PC-9 (cell line): ENCODE measurements at regions of chr11 and their contacts with region 1.

Region 1: DNA sequence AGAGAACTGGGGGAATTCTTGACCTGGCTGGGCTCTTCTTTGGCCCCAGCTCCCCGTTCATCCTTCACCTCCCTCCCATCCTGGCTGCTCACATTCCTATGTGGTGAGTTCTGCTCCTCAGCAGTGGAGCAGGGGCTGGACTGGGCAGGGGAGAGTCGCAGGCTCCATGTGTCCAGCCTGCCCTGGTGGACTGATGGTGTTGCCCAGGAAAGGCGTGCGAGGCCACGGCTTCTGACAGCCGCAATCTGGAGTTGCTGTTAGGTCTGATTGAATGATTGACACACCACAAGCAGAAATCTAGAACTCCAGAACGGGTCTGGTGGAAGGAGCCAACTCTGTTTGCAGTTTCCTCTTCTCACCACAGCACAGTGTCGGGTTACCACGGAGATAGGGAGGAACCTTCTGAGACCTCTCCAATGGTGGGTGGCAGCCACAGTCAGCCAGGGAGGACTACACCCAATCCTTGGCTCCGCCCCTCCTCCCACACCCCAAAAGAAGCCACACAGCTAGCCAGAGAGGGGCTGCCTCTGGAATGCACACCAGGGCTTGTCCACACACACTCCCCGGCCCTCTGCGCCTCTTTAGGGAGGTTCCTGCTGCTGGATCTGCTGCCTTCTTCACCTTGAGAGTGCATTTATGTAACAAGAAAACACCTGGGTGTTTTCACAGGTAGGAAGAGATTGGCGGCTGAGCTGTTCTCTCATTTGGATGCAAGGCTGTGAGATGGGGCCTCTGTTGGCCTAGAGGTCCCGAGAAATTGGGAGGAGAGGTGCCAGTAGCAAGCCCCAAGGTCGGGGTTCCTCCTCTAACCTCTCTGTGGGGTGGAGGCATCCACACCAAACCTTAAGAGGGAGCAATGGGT is 56.4 kb upstream of the CD44 start:
- DNase-seq: peak; percentile 94 to 95
- H3K4me3 ChIP-seq: peak overlapping the region; percentile 39; the same call in 1 of the 2 replicates
- H3K27ac ChIP-seq: peak overlapping the region; percentile 85
- H3K4me1 ChIP-seq: peaks cover 69% of the 10 kb centered on the region
- H3K27me3 ChIP-seq: no peaks in the 10 kb centered on the region
- CTCF ChIP-seq: no peak

Region 2: GRCh38 chr11:33606762-33607161 is 1475.8 kb before region 1 on chr11:
- CTCF ChIA-PET with region 1: no interaction called
- POLR2A ChIA-PET with region 1: no interaction called
- intact Hi-C with region 1: no loop called
- DNase-seq: no peak
- H3K4me3 ChIP-seq: no peak overlapping the region
- H3K27ac ChIP-seq: no peak overlapping the region
- H3K4me1 ChIP-seq: no peaks in the 10 kb centered on the region
- H3K27me3 ChIP-seq: no peaks in the 10 kb centered on the region
- CTCF ChIP-seq: no peak

Region 3: GRCh38 chr11:34916015-34916842 is 166.3 kb before region 1 on chr11 and contains the starts of genes APIP and PDHX:
- CTCF ChIA-PET with region 1: no interaction called
- POLR2A ChIA-PET with region 1: no interaction called
- intact Hi-C with region 1: loop called (anchors 2 kb)
- DNase-seq: peak; percentile 98 to 99
- H3K4me3 ChIP-seq: peak within 1 kb of the TSS; percentile 74
- H3K27ac ChIP-seq: peak within 1 kb of the TSS; percentile 83
- H3K4me1 ChIP-seq: peaks cover 26% of the 10 kb centered on the region
- H3K27me3 ChIP-seq: no peaks in the 10 kb centered on the region
- CTCF ChIP-seq: no peak
- total RNA-seq, gene APIP: 34.1 and 41.0 TPM in 2 replicates
- total RNA-seq, gene PDHX: 44.7 and 47.0 TPM in 2 replicates

Region 4: DNA sequence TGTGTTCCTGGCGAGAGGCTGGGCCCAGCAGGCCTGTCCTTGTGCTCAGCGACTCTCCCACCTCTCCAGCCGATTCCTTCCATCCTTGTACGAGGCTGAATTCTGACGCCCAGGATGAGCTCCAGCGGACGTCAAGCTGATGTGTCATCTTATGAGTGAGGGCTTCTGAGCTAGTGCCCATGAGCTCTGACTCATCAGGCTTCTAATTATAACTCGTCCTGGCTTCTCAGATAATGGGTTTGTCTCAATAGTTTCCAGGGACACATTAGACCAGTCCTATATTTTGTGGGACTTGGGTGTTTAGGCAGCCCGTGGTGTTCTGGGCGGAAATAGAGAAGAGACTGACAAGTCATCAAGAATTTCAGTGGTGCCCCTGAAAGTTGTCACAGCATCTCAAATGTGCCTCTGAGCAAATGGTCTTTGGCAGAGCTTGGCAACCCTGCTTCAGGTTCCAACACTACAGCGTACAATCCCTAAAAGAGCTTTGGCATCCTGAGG is 51.8 kb before region 1 on chr11:
- CTCF ChIA-PET with region 1: no interaction called
- POLR2A ChIA-PET with region 1: interaction called, 5 read pairs
- intact Hi-C with region 1: loop called (anchors 2 kb)
- DNase-seq: peak; percentile 66 to 95
- H3K4me3 ChIP-seq: peak overlapping the region; percentile 8; the same call in 1 of the 2 replicates
- H3K27ac ChIP-seq: peak overlapping the region; percentile 85
- H3K4me1 ChIP-seq: peaks cover 49% of the 10 kb centered on the region
- H3K27me3 ChIP-seq: no peaks in the 10 kb centered on the region
- CTCF ChIP-seq: no peak

Region 5: GRCh38 chr11:35049859-35050531 is 32.6 kb before region 1 on chr11:
- CTCF ChIA-PET with region 1: no interaction called
- POLR2A ChIA-PET with region 1: no interaction called
- intact Hi-C with region 1: loop called (anchors 2 kb)
- DNase-seq: no peak
- H3K4me3 ChIP-seq: no peak overlapping the region
- H3K27ac ChIP-seq: no peak overlapping the region
- H3K4me1 ChIP-seq: 0 out of 2 replicates have a peak, but pooled peaks cover 4% of the 10 kb centered on the region
- H3K27me3 ChIP-seq: no peaks in the 10 kb centered on the region
- CTCF ChIP-seq: no peak

Region 6: GRCh38 chr11:35118906-35119305 is 36.4 kb after region 1 on chr11:
- CTCF ChIA-PET with region 1: no interaction called
- POLR2A ChIA-PET with region 1: no interaction called
- intact Hi-C with region 1: no loop called
- DNase-seq: no peak
- H3K4me3 ChIP-seq: no peak overlapping the region
- H3K27ac ChIP-seq: no peak overlapping the region
- H3K4me1 ChIP-seq: 0 out of 2 replicates have a peak, but pooled peaks cover 8% of the 10 kb centered on the region
- H3K27me3 ChIP-seq: no peaks in the 10 kb centered on the region
- CTCF ChIP-seq: no peak

Region 7: GRCh38 chr11:35138943-35139721 is 56.6 kb after region 1 on chr11 and contains the start of gene CD44:
- CTCF ChIA-PET with region 1: no interaction called
- POLR2A ChIA-PET with region 1: interaction called, 5 read pairs
- intact Hi-C with region 1: loop called (anchors 1 kb)
- DNase-seq: peak; percentile 72 to 84
- H3K4me3 ChIP-seq: peak within 1 kb of the TSS; percentile 70
- H3K27ac ChIP-seq: peak within 1 kb of the TSS; percentile 91
- H3K4me1 ChIP-seq: peaks cover 66% of the 10 kb centered on the region
- H3K27me3 ChIP-seq: no peaks in the 10 kb centered on the region
- CTCF ChIP-seq: no peak
- total RNA-seq, gene CD44: 775 and 872 TPM in 2 replicates

Region 8: DNA sequence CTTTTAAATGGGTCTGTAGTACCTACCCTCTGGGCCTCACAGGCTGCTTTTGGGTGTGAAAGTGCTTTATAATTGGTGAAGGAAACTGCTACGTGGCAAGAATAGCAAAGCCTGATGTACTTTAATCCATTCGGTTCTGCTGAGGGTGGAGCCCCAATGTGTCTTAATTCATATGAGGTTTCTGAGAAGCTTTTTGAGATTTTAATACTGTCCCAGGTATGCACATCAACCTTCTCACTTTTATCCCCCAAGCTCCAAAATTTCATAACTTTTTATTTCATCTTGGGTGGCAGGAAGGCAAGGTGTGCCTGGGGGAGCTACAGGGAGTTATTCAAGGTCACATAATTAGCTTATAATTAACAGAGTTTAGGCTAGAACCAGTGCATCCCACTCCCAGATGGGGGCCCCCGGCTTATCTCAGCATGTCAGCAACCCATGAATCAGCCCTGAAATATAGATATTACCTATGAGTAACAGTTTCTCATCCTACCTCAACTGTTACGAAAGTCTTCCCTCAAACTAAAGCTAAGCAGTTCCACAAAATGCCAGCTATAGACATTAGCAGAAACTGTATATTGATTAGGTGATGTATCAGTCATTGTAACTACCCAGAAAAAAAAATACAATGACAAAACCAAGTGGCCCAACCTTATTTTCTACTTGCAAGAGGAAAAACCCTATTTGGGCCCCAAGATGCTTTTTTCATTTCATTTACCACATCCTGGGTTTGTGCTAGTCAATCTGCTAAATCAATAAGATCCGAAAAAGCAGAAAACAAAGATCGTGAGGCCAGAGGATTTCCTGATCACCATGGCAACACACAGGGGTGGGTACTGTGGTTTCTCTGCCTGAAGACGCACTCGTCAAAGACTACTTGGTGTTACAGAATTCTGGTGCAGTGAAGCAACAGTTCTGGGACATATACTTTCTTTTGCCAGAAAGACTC is 83.1 kb after region 1 on chr11:
- CTCF ChIA-PET with region 1: no interaction called
- POLR2A ChIA-PET with region 1: no interaction called
- intact Hi-C with region 1: loop called (anchors 1 kb)
- DNase-seq: peak in 1 of 2 experiments; percentile 85
- H3K4me3 ChIP-seq: peak overlapping the region; percentile 36
- H3K27ac ChIP-seq: peak overlapping the region; percentile 94
- H3K4me1 ChIP-seq: peaks cover 100% of the 10 kb centered on the region
- H3K27me3 ChIP-seq: no peaks in the 10 kb centered on the region
- CTCF ChIP-seq: no peak

Region 9: GRCh38 chr11:35289821-35290220 is 207.3 kb after region 1 on chr11:
- CTCF ChIA-PET with region 1: no interaction called
- POLR2A ChIA-PET with region 1: no interaction called
- intact Hi-C with region 1: loop called (anchors 10 kb)
- DNase-seq: no peak
- H3K4me3 ChIP-seq: no peak overlapping the region
- H3K27ac ChIP-seq: no peak overlapping the region
- H3K4me1 ChIP-seq: peaks cover 5% of the 10 kb centered on the region; the same call in 1 of the 2 replicates
- H3K27me3 ChIP-seq: no peaks in the 10 kb centered on the region
- CTCF ChIP-seq: no peak